Vagina (tissue), 2 donors: ENCODE measurements at regions of chr1 and their contacts with region 1.

Region 1: GRCh38 chr1:43454266-43455011 is 708 bp upstream of the HYI start:
- DNase-seq: peak; percentile 88 to 94
- H3K4me3 ChIP-seq: peak overlapping the region; percentile 56 to 70
- H3K27ac ChIP-seq: peak overlapping the region; percentile 95
- H3K4me1 ChIP-seq: peaks cover 24% of the 10 kb centered on the region
- H3K27me3 ChIP-seq: no peaks in the 10 kb centered on the region
- CTCF ChIP-seq: peak in 1 of 3 experiments; percentile 10
- POLR2A ChIP-seq: no peak

Region 2: DNA sequence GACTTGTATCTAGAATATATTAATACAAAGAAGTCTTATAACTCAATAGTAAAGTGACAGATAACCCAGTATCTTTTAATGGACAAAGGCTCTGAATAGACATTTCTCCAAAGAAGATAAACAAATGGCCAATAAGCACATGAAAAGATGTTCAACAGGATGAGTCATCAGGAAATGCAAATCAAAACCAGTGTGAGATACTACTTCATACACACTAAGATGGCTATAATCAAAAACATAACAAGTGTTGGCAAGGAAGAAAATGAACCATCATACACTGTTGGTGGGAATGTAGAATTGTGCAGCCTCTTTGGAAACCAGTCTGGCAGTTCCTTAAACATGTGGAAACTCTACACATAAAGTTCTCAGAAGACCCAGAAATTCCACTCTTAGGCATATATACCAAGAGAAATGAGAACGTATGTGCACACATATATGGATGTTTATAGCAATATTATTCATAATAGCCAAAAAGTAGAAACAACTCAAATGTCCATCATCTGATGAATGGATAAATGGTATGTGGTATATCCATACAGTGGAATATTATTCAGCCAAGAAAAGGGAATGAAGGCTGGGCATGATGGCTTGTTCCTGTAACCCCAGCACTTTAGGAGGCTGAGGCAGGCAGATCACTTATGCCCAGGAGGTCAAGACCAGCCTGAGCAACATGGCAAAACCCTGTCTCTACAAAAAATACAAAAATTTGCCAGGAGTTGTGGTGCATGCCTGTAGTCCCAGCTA is 126.7 kb before region 1 on chr1:
- intact Hi-C with region 1: no loop called
- DNase-seq: no peak
- H3K4me3 ChIP-seq: no peak overlapping the region
- H3K27ac ChIP-seq: no peak overlapping the region
- H3K4me1 ChIP-seq: peaks cover 8% of the 10 kb centered on the region
- H3K27me3 ChIP-seq: no peaks in the 10 kb centered on the region
- CTCF ChIP-seq: no peak
- POLR2A ChIP-seq: no peak

Region 3: GRCh38 chr1:43367904-43368645 is 86.4 kb before region 1 on chr1 and contains the start of gene ELOVL1:
- intact Hi-C with region 1: loop called (anchors 10 kb)
- DNase-seq: no peak
- H3K4me3 ChIP-seq: peak within 1 kb of the TSS; percentile 85 to 97
- H3K27ac ChIP-seq: peak within 1 kb of the TSS; percentile 92
- H3K4me1 ChIP-seq: peaks cover 33% of the 10 kb centered on the region
- H3K27me3 ChIP-seq: no peaks in the 10 kb centered on the region
- CTCF ChIP-seq: peak in 1 of 3 experiments; percentile 11
- POLR2A ChIP-seq: peak in 1 of 2 donors; percentile 41
- total RNA-seq, gene ELOVL1: 62.1 TPM

Region 4: GRCh38 chr1:44390277-44390676 is 935.8 kb after region 1 on chr1:
- intact Hi-C with region 1: no loop called
- DNase-seq: no peak
- H3K4me3 ChIP-seq: no peak overlapping the region
- H3K27ac ChIP-seq: no peak overlapping the region
- H3K4me1 ChIP-seq: no peaks in the 10 kb centered on the region
- H3K27me3 ChIP-seq: no peaks in the 10 kb centered on the region
- CTCF ChIP-seq: no peak
- POLR2A ChIP-seq: no peak